RWPE1 (cell line): ENCODE measurements at regions of chr10 and their contacts with region 1.

Region 1: GRCh38 chr10:92832998-92833650 is 15.2 kb upstream of the EXOC6 start:
- DNase-seq: no peak
- H3K27ac ChIP-seq: no peak overlapping the region
- CTCF ChIP-seq: no peak

Region 2: GRCh38 chr10:92848441-92849233 is 15.5 kb after region 1 on chr10 and contains the start of gene EXOC6:
- CTCF ChIA-PET with region 1: interaction called, 13 read pairs
- POLR2A ChIA-PET with region 1: interaction called, 3 read pairs
- DNase-seq: peak; percentile 85
- H3K27ac ChIP-seq: peak within 1 kb of the TSS; percentile 55
- CTCF ChIP-seq: peak; percentile 20; the same call in 1 of the 2 replicates

Region 3: GRCh38 chr10:92891885-92892704 is 59.0 kb after region 1 on chr10:
- CTCF ChIA-PET with region 1: no interaction called
- POLR2A ChIA-PET with region 1: no interaction called
- DNase-seq: peak; percentile 92
- H3K27ac ChIP-seq: no peak overlapping the region
- CTCF ChIP-seq: no peak